Right ventricle myocardium inferior (tissue), 1 donor: ENCODE measurements at regions of chr1 and their contacts with region 1.

Region 1: DNA sequence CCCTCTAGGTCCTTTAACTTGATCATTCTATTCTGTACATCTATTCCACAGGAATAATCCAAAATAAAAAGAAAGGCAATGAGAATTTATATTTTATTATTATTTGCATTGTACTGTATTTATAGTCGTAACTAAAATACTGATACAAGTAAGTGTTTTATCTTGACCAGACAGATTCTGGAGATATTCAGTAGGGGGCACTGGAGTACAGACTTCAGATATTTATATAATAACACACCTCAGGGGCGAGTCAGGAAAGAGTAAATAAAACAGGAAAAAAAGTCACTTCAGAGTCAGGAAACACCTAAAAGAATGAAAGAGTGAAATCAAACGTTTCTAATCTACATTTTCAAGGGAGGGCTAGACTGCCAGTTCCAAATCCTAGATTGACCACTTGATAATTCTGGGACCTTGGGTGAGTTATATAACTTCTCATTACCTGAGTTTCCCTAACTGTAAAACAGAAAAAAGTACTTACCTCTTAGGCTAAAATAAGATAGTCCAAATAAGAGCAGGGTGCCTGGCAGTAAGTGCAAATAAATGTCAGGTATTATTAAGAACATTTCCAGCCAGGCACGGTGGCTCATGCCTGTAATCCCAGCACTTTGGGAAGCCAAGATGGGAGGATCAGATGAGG is 31.1 kb upstream of the MTF1 start:
- DNase-seq: no peak
- ATAC-seq: peak; percentile 50

Region 2: DNA sequence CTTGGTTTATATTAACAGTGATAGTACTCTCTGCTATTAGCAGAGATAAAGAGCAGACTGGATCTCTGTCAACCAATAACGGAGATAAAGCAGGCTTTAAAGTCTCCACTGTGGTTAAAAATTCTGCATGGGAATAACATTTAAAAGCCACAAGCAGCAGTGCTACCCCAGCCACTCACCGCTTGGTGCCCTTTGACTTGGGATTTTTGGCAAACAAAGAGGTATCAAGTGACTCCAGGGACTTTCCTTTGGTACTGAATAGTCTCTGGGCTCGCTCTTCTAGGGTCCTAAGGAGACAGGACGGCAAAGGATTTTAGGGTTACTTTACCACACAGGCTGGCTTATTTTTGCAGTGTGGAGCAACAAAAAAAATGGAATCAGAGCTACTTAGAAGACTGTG is 88.0 kb after region 1 on chr1:
- intact Hi-C with region 1: loop called (anchors 5 kb)
- DNase-seq: no peak
- ATAC-seq: no peak